ENCODE measurements at regions of chr4 and their contacts with region 1.

Region 1: DNA sequence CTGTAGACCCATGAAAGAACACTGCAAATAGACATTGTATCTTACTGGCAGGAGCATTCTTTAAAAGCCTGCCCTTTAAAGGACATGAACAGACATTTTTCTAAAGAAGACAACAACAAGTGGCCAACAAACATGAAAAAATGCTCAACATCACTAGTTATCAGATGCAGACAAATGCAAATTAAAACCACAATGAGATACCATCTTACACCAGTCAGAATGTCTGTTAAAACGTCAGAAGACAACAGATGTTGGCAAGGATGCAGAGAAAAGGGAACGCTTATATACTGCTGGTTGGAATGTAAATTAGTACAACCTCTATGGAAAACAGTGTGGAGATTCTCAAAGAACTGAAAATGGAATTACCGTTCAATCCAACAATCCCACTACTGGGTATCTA is 77.2 kb downstream of the ATP10D start:
- DNase-seq: no peak
- H3K4me3 ChIP-seq: no peak overlapping the region
- H3K27ac ChIP-seq: no peak overlapping the region
- H3K4me1 ChIP-seq: peaks cover 0 to 9% (median 0%) of the 10 kb centered on the region in 3 donors
- H3K27me3 ChIP-seq: no peaks in the 10 kb centered on the region
- CTCF ChIP-seq: no peak
- POLR2A ChIP-seq: no peak

Region 2: GRCh38 chr4:47499700-47500099 is 62.6 kb before region 1 on chr4:
- intact Hi-C with region 1: loop called (anchors 10 kb)
- DNase-seq: no peak
- H3K4me3 ChIP-seq: no peak overlapping the region
- H3K27ac ChIP-seq: no peak overlapping the region
- H3K4me1 ChIP-seq: peaks cover 0 to 14% (median 8%) of the 10 kb centered on the region in 3 donors
- H3K27me3 ChIP-seq: no peaks in the 10 kb centered on the region
- CTCF ChIP-seq: no peak
- POLR2A ChIP-seq: no peak

Region 3: DNA sequence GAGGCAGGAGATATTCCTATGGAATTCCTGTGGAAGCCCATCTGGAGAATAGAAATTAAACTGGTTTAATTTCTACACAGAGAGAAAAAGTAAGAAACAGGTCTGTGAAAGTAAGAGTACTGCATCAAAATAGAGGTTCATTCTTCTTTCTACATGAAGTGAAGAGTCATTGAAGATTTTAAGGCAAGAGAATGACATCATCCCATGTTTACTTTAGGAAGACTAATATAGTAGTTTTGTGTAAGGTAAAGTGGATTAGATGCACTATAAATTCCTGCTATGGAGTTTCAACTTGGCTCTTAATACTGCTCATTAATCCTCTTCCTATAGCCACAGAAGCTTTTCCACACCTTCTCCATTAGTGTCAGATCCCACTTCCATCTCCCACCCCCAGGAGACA is 406.6 kb after region 1 on chr4:
- intact Hi-C with region 1: no loop called
- DNase-seq: no peak
- H3K4me3 ChIP-seq: no peak overlapping the region
- H3K27ac ChIP-seq: no peak overlapping the region
- H3K4me1 ChIP-seq: no peaks in the 10 kb centered on the region
- H3K27me3 ChIP-seq: no peaks in the 10 kb centered on the region
- CTCF ChIP-seq: no peak
- POLR2A ChIP-seq: no peak

Measured in esophagus squamous epithelium (tissue), 5 donors.